ENCODE measurements at regions of chr3 and their contacts with region 1.

Region 1: DNA sequence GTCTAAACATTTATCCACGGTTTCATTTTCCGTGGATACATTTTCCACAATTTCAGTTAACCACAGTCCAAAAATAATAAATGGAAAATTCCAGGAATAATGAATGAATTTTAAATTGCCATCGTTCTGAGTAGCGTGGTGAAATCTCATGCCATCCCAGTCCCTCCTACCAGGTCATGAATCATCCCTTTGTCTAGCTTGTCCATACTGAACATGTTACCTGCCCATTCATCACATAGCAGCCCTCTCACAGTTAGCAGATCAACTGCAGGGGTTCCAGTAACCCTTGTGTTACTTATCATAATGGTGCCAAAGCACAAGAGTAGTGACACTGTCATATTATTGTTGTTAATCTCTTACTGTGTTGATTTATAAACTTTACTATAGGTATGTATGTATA is 124.5 kb downstream of the GSK3B start:
- DNase-seq: no peak
- ATAC-seq: no peak
- H3K4me3 ChIP-seq: no peak overlapping the region
- H3K4me3 Mint-ChIP-seq: no peak overlapping the region
- H3K27ac ChIP-seq: no peak overlapping the region
- H3K27ac Mint-ChIP-seq: no peak overlapping the region
- H3K4me1 ChIP-seq: no peaks in the 10 kb centered on the region
- H3K4me1 Mint-ChIP-seq: peaks cover 39% of the 10 kb centered on the region
- H3K27me3 ChIP-seq: no peaks in the 10 kb centered on the region
- H3K27me3 Mint-ChIP-seq: no peaks in the 10 kb centered on the region
- CTCF ChIP-seq: no peak

Region 2: DNA sequence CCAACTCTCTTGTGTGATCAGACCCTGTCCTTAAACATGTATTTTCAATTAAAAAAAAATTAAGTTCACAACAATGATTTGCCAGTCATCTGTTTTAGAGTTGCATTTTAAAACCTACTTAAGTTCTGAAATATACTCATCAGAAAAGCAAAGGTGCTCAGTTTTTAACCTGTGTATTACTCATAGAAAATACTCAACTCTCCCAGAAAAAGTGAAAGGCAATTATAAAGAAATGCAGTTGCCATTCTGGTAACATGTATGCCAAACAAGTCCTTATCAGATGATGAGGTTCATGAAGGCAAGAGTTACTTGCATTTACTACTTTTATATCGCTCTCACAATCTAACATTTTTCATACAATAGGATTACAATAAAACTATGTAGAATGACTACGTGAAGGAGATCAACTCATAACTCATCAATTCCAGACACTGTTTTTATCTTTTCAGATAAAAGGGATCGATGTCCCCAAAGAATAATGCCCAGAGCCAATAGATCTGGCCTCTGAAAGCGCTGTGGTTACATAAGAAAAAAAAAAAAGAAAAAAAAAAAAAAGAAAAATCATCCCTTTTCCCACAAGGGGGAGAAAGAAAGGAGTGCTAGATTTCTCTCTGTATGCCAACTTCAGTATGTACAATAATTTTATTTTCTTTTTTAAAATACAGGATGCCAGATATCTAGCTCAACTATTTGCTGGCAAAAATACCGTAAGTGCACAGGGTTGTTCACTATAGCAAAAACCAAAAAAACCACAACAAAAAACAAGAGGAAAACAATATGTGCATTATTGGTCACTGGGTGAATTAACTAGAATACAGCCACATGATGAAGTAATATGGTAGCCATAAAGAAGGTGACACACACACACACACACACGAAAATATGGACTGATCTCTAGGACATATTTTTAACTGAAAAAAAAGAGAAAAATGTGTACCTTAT is 50.5 kb before region 1 on chr3:
- CTCF ChIA-PET with region 1: no interaction called
- POLR2A ChIA-PET with region 1: no interaction called
- intact Hi-C with region 1: loop called in 1 of 2 experiments (anchors 10 kb)
- DNase-seq: no peak
- ATAC-seq: no peak
- H3K4me3 ChIP-seq: no peak overlapping the region
- H3K4me3 Mint-ChIP-seq: no peak overlapping the region
- H3K27ac ChIP-seq: no peak overlapping the region
- H3K27ac Mint-ChIP-seq: no peak overlapping the region
- H3K4me1 ChIP-seq: no peaks in the 10 kb centered on the region
- H3K4me1 Mint-ChIP-seq: peaks cover 24% of the 10 kb centered on the region
- H3K27me3 ChIP-seq: no peaks in the 10 kb centered on the region
- H3K27me3 Mint-ChIP-seq: no peaks in the 10 kb centered on the region
- CTCF ChIP-seq: no peak